ENCODE measurements at regions of chr14 and their contacts with region 1.

Region 1: GRCh38 chr14:56474419-56475022 is 105.1 kb upstream of the TMEM260 start:
- DNase-seq: no peak
- H3K4me3 Mint-ChIP-seq: no peak overlapping the region
- H3K27ac Mint-ChIP-seq: no peak overlapping the region
- H3K4me1 Mint-ChIP-seq: no peaks in the 10 kb centered on the region
- H3K27me3 Mint-ChIP-seq: peaks cover 16% of the 10 kb centered on the region

Region 2: DNA sequence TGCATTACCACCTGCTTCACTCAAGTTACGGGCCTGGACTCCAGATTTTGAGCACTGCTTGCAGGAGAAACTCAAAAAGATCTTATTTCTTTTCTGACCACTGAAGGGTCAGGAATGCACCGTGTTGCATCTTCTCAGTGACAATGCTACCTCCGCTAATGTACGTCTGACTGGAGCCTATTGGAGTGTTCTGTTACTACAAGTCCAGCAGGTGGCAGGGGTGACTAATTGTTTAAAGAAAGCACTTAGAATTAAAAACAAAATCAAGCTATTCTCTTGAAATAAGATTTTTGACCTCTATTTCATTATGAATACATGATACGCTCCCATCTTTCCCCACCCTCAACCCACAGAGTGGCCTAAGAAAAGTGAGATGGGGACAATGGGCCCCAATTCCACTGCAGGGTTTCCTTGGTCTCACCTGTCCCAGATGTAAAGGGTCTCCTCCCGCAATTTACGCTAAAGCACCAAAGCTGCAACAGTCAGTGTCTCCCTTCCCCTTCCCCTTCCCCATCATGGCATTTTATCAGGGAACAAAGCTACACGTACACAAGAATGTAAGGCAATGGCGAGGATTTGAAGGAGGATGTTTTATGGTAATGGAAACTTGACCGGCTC is 1036.3 kb before region 1 on chr14:
- intact Hi-C with region 1: loop called (anchors 2 kb)
- DNase-seq: no peak
- H3K4me3 Mint-ChIP-seq: no peak overlapping the region
- H3K27ac Mint-ChIP-seq: no peak overlapping the region
- H3K4me1 Mint-ChIP-seq: peaks cover 16% of the 10 kb centered on the region
- H3K27me3 Mint-ChIP-seq: peaks cover 2% of the 10 kb centered on the region

Region 3: GRCh38 chr14:55446218-55446654 is 1028.3 kb before region 1 on chr14:
- intact Hi-C with region 1: loop called (anchors 1 kb)
- DNase-seq: peak; percentile 28
- H3K4me3 Mint-ChIP-seq: no peak overlapping the region
- H3K27ac Mint-ChIP-seq: no peak overlapping the region
- H3K4me1 Mint-ChIP-seq: peaks cover 18% of the 10 kb centered on the region
- H3K27me3 Mint-ChIP-seq: no peaks in the 10 kb centered on the region

Region 4: GRCh38 chr14:55707365-55707804 is 767.1 kb before region 1 on chr14:
- intact Hi-C with region 1: loop called (anchors 1 kb)
- DNase-seq: no peak
- H3K4me3 Mint-ChIP-seq: no peak overlapping the region
- H3K27ac Mint-ChIP-seq: no peak overlapping the region
- H3K4me1 Mint-ChIP-seq: no peaks in the 10 kb centered on the region
- H3K27me3 Mint-ChIP-seq: no peaks in the 10 kb centered on the region

Region 5: DNA sequence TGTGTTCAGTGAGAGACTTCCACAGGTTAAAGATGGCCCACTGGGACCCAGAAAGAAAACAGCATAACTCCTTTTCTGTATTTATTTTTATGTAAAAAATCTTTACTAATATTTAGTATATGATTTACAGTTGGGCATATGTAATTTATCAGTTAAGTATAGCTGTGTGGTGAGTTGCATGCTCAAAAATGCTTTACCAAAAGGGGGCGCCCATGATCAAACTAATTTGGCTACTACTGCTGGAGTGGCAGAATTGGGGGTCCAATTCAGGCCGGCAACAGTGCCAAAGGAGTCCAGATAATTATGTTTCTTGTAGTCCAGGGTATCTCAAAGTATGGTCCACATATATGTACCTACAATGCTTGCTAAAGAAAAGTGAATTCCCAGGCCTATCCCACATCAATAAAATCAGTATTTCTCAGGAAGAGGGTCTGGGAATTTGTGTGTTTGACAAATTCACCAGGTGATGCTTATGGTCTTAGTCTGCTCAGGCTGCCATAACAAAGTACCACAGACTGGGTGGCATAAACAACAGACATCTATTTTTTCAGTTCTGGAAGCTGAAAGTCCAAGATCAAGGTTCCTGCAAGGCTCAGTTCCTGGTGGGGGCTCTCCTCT is 742.5 kb before region 1 on chr14:
- intact Hi-C with region 1: loop called (anchors 1 kb)
- DNase-seq: peak; percentile 21
- H3K4me3 Mint-ChIP-seq: no peak overlapping the region
- H3K27ac Mint-ChIP-seq: no peak overlapping the region
- H3K4me1 Mint-ChIP-seq: peaks cover 26% of the 10 kb centered on the region
- H3K27me3 Mint-ChIP-seq: peaks cover 4% of the 10 kb centered on the region